Adrenal gland (tissue), 19 donors: ENCODE measurements at regions of chr2 and their contacts with region 1.

Region 1: GRCh38 chr2:108583903-108584520 is 49.7 kb downstream of the LIMS1 start:
- DNase-seq: peak; percentile 63 to 88 (median 74)
- H3K4me3 ChIP-seq: no peak overlapping the region
- H3K27ac ChIP-seq: peak overlapping the region in 2 of 5 donors; percentile 58 to 80
- H3K4me1 ChIP-seq: peaks cover 24 to 63% of the 10 kb centered on the region in 2 donors
- H3K27me3 ChIP-seq: no peaks in the 10 kb centered on the region
- CTCF ChIP-seq: peak; percentile 62 to 94 (median 85)
- POLR2A ChIP-seq: no peak

Region 2: DNA sequence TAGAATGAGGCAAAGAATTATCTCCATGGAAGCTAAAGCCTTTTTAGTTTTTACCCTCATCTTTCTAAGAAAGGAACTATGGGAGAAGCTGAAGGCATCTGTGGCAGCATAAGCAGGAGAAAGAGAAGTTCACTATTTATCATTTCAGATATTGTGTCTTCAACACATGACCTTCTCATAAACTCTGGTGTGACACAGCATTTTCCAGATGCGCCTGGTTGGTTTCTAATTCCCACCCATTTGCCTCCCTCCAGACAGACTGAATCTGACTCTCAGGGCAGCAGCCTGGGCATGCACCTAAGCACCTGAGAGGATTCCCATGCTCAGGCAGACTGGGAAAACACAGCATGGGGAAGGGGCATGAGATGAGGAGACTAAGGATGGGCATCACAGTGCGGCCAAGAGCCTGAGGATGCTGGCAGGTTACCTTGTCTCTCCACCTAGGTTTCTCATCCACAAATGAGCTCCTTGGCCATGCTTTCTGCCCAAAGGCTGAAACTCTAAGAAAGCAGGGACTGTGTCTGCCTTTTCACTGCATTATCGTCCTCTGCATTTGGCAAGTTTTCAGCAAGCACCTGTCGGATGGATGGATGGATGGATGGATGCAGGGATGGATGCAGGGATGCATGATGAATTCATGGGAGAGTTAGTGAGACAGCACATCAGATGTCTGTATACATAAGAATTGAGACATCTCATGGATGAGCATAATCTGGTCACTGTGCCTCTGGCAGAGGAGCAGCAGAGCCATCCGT is 235.0 kb before region 1 on chr2:
- intact Hi-C with region 1: loop called in 1 of 2 experiments (anchors 10 kb)
- DNase-seq: no peak
- H3K4me3 ChIP-seq: no peak overlapping the region
- H3K27ac ChIP-seq: no peak overlapping the region
- H3K4me1 ChIP-seq: no peaks in the 10 kb centered on the region
- H3K27me3 ChIP-seq: no peaks in the 10 kb centered on the region
- CTCF ChIP-seq: no peak
- POLR2A ChIP-seq: no peak

Region 3: DNA sequence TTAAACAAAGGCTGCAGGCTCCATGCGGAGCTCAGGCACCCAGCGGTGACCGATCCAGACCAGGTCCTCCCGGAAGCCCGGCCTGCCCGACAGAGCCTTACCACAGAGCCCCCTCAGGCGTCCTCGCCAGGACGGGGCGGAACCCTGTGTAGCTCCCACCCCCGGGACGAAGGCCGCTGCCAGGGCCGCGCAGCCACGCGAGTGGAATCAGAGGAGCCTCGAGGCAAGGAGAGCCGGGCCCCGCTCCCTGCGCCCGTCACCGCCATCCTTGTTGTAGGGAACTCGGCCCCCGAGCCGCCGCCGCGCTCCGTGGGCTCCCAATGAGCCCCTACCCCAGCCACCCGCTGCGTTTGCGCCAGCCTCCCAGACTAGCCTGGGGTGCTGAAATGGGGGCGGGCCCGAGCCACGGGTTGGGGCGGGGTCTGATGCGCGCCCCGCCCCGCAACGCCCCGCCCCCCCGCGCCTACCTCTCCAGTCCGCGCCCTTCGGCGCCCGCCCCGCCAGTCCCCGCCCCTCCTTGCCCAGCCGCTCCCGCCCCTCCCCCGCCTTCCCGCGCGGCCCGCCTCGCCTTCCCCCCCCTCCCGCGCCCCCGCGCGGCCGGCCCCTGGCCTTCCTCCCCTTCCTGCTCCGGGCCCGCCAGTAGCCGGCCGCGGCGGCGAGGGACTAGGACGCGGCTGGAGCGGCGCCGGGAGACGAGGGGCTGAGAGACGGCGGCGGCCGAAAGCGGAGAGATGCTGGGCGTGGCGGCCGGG is 50.0 kb before region 1 on chr2 and contains the start of gene LIMS1:
- intact Hi-C with region 1: loop called (anchors 10 kb)
- DNase-seq: peak; percentile 93 to 95 (median 94)
- H3K4me3 ChIP-seq: peak within 1 kb of the TSS; percentile 50 to 81 (median 58)
- H3K27ac ChIP-seq: peak within 1 kb of the TSS; percentile 90 to 99 (median 95)
- H3K4me1 ChIP-seq: peaks cover 8 to 31% of the 10 kb centered on the region in 2 donors
- H3K27me3 ChIP-seq: no peaks in the 10 kb centered on the region
- CTCF ChIP-seq: no peak
- POLR2A ChIP-seq: peak; percentile 75 to 90
- total RNA-seq, gene LIMS1: 75.3 to 182 (median 131) TPM